ENCODE measurements at regions of chr20 and their contacts with region 1.

Region 1: DNA sequence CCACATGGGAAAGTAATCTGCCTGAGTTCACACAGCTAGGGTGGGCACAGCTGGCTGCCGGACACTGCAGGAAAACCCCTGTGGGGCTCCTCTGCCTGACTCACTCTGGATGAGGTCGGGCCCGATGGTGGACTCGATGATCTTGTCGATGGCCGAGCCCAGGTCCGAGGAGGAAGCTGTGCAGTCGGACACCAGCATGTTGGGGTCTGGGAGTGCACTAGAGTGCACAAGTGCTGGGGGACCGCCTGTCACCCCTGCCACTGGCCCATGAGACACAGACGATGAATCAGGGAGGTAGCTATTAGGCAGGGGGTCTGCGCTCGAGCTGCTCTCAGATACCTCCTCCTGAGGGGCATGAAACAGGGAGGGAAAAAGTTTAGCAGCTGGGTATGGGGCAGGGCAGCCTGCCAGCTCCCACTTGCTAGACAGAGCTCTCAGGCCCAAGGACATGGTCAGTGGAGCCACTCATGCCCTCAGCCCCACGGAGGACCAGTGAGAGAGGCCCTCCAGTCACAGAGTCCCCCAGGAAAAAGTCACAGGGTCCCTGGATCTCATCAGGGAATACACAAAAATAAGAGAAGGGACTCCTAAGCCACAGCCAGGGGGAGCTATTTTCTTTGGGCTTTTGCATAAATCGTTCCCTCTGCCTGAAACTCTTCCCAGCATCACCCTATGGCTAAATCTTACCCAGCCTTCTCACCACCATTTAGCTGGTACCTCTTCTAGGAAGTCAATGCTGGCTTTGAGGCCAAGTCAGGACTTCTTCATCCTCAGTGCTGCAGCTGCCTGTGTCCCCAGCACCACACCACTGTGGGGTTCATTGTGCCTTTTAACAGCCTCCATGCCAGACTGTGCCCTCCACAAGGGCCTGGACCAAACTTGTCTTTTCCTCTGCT is 2.4 kb downstream of the ZNF335 start:
- DNase-seq: peak in 3 of 5 donors; percentile 57 to 76 (median 69)
- H3K4me3 ChIP-seq: peak overlapping the region in 2 of 3 donors; percentile 4 to 98
- H3K27ac ChIP-seq: no peak overlapping the region
- H3K4me1 ChIP-seq: peaks cover 0 to 14% (median 7%) of the 10 kb centered on the region in 3 donors
- H3K27me3 ChIP-seq: no peaks in the 10 kb centered on the region
- CTCF ChIP-seq: peak; percentile 29

Region 2: DNA sequence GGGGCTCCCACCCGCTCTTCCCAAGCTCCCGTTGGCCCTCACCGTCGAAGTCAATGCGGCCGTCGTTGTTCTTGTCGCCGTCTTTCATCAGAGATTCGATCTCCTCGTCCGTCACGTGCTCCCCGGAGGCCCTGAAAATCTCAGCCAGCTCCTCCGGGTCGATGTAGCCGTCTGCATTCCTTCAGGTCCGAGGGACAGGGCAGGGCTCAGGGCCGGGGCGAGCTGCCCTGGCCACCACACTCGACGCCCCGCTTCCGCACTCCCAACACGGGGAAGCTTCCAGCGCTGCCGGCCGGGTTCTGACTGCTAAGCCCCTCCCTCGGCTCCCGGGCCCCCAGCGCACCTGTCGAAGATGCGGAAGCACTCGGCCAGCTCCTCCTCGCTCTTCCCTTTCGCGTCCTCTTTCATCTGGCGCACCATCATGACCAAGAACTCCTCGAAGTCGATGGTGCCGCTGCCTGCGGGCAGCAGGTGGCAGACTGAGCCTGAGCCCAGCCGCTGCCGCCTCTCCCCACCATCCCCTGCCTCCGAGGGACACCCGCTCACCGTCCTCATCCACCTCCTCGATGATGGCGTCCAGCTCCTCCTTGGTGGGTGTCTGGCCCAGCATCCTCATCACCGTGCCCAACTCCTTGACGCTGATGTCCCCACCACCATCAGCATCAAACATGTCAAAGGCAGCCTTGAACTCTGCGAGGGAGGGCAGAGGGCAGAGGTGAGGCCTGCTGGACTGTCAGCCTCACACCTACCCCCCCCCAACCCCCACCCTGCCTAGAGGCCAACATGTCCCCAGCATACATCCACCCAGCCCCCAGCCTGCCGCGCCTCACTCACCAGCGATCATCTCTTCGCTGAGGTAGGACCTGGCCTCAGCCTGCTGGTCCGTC is 145.4 kb before region 1 on chr20:
- intact Hi-C with region 1: loop called (anchors 10 kb)
- DNase-seq: peak; percentile 39 to 81 (median 62)
- H3K4me3 ChIP-seq: no peak overlapping the region
- H3K27ac ChIP-seq: no peak overlapping the region
- H3K4me1 ChIP-seq: peaks cover 0 to 11% (median 0%) of the 10 kb centered on the region in 3 donors
- H3K27me3 ChIP-seq: peaks cover 8% of the 10 kb centered on the region
- CTCF ChIP-seq: peak; percentile 49